ENCODE measurements at regions of chr19 and their contacts with region 1.

Region 1: GRCh38 chr19:1205114-1206062 is at the start of gene STK11:
- DNase-seq: peak; percentile 96 to 98 (median 98)
- H3K4me3 ChIP-seq: peak within 1 kb of the TSS; percentile 69 to 92 (median 77)
- H3K27ac ChIP-seq: peak within 1 kb of the TSS in 1 of 2 experiments; percentile 71
- H3K4me1 ChIP-seq: peaks cover 0 to 60% (median 53%) of the 10 kb centered on the region in 4 experiments
- H3K27me3 ChIP-seq: no peaks in the 10 kb centered on the region

Region 2: DNA sequence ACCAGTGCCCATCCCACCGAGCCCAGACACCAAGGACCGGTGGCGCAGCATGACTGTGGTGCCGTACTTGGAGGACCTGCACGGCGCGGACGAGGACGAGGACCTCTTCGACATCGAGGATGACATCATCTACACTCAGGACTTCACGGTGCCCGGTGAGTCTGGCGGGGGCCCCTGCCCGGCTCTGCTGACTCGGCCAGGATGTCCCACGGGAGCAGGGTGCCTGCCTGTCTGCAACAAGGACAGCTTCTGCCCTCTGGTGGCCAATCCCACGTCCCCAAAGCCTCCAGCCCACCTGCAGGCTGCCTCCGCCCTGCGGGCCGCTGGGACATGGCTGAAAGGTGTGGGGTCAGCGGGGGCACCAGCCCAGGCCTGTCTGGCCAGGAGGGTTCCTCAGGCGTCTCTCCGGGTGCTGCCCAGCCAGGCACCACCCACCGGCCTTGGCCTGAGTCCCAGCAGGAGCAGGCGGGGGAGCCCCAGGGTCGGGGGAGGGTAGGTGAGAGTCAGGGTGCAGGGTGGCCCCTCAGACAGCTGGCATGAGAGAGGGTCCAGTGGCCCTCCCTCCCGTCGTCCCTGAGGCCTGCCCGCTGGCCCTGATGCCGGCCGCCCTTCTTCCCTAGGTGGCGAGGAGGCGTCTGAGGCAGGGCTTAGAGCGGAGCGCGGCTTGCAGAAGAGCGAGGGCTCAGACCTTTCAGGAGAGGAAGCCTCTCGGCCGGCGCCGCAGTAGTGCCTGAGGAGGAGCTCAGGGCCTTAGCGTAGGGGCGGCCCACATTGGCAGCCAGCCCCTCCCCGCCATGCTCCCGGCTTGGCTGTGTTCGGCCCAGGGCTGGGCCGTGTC is 17.8 kb after region 1 on chr19:
- CTCF ChIA-PET with region 1: interaction called, 33 read pairs
- POLR2A ChIA-PET with region 1: interaction called, 5 read pairs
- DNase-seq: peak in 2 of 3 donors; percentile 52 to 59
- H3K4me3 ChIP-seq: no peak overlapping the region
- H3K27ac ChIP-seq: no peak overlapping the region
- H3K4me1 ChIP-seq: peaks cover 0 to 3% (median 0%) of the 10 kb centered on the region in 4 experiments
- H3K27me3 ChIP-seq: no peaks in the 10 kb centered on the region